ENCODE measurements at regions of chr3 and their contacts with region 1.

Region 1: DNA sequence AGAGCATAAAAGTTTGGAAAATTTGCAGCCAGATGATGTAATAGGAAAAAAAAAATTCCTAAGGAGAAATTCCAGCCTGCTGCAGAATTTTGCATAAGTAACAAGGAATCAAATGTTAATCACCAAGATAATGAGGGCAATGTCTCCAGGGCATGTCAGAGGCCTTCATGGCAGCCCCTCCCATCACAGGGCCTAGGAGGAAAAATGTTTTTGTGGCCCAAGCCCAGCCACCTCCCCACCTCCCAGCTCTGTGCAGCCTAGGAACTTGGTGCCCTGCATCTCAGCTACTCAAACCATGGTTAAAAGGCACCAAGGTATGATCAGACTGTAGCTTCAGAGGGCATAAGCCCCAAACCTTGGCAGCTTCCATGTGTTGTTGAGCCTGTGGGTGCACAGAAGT is 704.7 kb upstream of the ROBO1 start:
- DNase-seq: no peak
- ATAC-seq: no peak
- H3K4me3 ChIP-seq: no peak overlapping the region
- H3K27ac ChIP-seq: no peak overlapping the region
- H3K4me1 ChIP-seq: no peaks in the 10 kb centered on the region
- H3K27me3 ChIP-seq: no peaks in the 10 kb centered on the region
- CTCF ChIP-seq: no peak

Region 2: GRCh38 chr3:80263260-80263659 is 209.2 kb before region 1 on chr3:
- intact Hi-C with region 1: no loop called
- DNase-seq: no peak
- ATAC-seq: no peak
- H3K4me3 ChIP-seq: no peak overlapping the region
- H3K27ac ChIP-seq: no peak overlapping the region
- H3K4me1 ChIP-seq: no peaks in the 10 kb centered on the region
- H3K27me3 ChIP-seq: no peaks in the 10 kb centered on the region
- CTCF ChIP-seq: no peak

Region 3: DNA sequence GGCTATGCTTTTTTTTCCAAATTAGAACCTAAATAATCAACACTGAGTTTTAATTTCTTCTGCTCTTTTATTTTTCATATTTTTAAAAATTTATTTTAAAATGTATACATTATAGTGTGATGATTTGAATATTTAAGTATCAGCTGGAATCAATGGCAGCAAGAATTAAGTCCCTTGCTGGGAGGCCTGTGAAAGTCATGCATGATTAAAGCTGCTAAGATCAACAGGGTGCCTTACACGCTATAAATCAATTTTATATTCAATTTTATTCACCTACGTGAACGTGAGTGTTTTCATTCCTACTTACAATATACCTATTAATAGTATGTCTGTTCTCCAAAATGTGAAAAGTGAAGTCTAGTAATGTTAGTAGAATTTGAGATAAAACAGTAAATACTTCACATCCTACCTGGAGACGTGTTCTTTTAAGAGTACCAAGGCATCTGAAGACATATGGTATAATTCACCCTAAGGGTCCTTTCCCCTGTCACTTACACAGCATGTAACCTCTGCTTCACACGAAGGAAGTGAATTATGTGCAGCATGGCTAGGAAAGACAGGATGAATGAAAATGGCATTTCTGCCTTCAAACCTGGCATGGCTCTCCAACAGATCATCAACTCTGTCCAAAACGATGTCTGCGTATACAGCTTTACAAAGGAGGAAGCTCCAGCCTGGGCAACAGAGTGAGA is 64.3 kb before region 1 on chr3:
- intact Hi-C with region 1: loop called in 1 of 10 experiments (anchors 10 kb)
- DNase-seq: no peak
- ATAC-seq: no peak
- H3K4me3 ChIP-seq: no peak overlapping the region
- H3K27ac ChIP-seq: no peak overlapping the region
- H3K4me1 ChIP-seq: no peaks in the 10 kb centered on the region
- H3K27me3 ChIP-seq: no peaks in the 10 kb centered on the region
- CTCF ChIP-seq: no peak

Region 4: GRCh38 chr3:80521074-80521473 is 48.6 kb after region 1 on chr3:
- intact Hi-C with region 1: no loop called
- DNase-seq: no peak
- ATAC-seq: no peak
- H3K4me3 ChIP-seq: no peak overlapping the region
- H3K27ac ChIP-seq: no peak overlapping the region
- H3K4me1 ChIP-seq: no peaks in the 10 kb centered on the region
- H3K27me3 ChIP-seq: no peaks in the 10 kb centered on the region
- CTCF ChIP-seq: no peak

Region 5: GRCh38 chr3:80542456-80542855 is 70.0 kb after region 1 on chr3:
- intact Hi-C with region 1: no loop called
- DNase-seq: no peak
- ATAC-seq: no peak
- H3K4me3 ChIP-seq: no peak overlapping the region
- H3K27ac ChIP-seq: no peak overlapping the region
- H3K4me1 ChIP-seq: no peaks in the 10 kb centered on the region
- H3K27me3 ChIP-seq: no peaks in the 10 kb centered on the region
- CTCF ChIP-seq: no peak

Region 6: GRCh38 chr3:80618295-80619256 is 146.1 kb after region 1 on chr3:
- intact Hi-C with region 1: no loop called
- DNase-seq: no peak
- ATAC-seq: no peak
- H3K4me3 ChIP-seq: no peak overlapping the region
- H3K27ac ChIP-seq: no peak overlapping the region
- H3K4me1 ChIP-seq: no peaks in the 10 kb centered on the region
- H3K27me3 ChIP-seq: no peaks in the 10 kb centered on the region
- CTCF ChIP-seq: no peak